ENCODE measurements at regions of chr15 and their contacts with region 1.

Region 1: DNA sequence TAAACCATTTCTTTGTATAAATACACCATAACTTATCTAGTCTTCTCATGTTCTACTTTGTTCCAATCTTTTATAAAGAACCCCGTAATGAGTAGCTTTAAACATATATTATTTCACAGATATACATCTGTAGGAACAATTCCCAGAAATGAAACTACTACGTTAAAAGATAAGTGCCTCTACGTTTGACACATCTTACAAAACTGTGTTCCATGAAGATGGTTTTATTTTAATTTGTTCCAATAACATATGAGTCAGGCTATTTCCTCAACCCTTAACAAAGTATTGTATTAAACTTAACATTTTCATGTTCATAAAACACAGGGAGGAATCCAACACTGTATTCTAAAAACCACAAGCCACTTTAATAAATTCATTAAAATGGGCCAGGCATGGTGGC is 52.9 kb downstream of the TRPM7 start:
- DNase-seq: no peak
- ATAC-seq: no peak
- H3K4me3 ChIP-seq: no peak overlapping the region
- H3K4me3 Mint-ChIP-seq: no peak overlapping the region
- H3K27ac ChIP-seq: no peak overlapping the region
- H3K27ac Mint-ChIP-seq: no peak overlapping the region
- H3K4me1 ChIP-seq: no peaks in the 10 kb centered on the region
- H3K4me1 Mint-ChIP-seq: no peaks in the 10 kb centered on the region
- H3K27me3 ChIP-seq: no peaks in the 10 kb centered on the region
- H3K27me3 Mint-ChIP-seq: no peaks in the 10 kb centered on the region
- CTCF ChIP-seq: no peak

Region 2: GRCh38 chr15:50519740-50520425 is 113.8 kb before region 1 on chr15:
- CTCF ChIA-PET with region 1: no interaction called
- POLR2A ChIA-PET with region 1: no interaction called
- intact Hi-C with region 1: no loop called
- DNase-seq: no peak
- ATAC-seq: no peak
- H3K4me3 ChIP-seq: no peak overlapping the region
- H3K4me3 Mint-ChIP-seq: no peak overlapping the region
- H3K27ac ChIP-seq: no peak overlapping the region
- H3K27ac Mint-ChIP-seq: no peak overlapping the region
- H3K4me1 ChIP-seq: no peaks in the 10 kb centered on the region
- H3K4me1 Mint-ChIP-seq: no peaks in the 10 kb centered on the region
- H3K27me3 ChIP-seq: no peaks in the 10 kb centered on the region
- H3K27me3 Mint-ChIP-seq: no peaks in the 10 kb centered on the region
- CTCF ChIP-seq: no peak

Region 3: GRCh38 chr15:50576166-50576565 is 57.5 kb before region 1 on chr15:
- CTCF ChIA-PET with region 1: no interaction called
- POLR2A ChIA-PET with region 1: no interaction called
- intact Hi-C with region 1: loop called (anchors 10 kb)
- DNase-seq: no peak
- ATAC-seq: no peak
- H3K4me3 ChIP-seq: no peak overlapping the region
- H3K4me3 Mint-ChIP-seq: no peak overlapping the region
- H3K27ac ChIP-seq: no peak overlapping the region
- H3K27ac Mint-ChIP-seq: no peak overlapping the region
- H3K4me1 ChIP-seq: no peaks in the 10 kb centered on the region
- H3K4me1 Mint-ChIP-seq: no peaks in the 10 kb centered on the region
- H3K27me3 ChIP-seq: no peaks in the 10 kb centered on the region
- H3K27me3 Mint-ChIP-seq: no peaks in the 10 kb centered on the region
- CTCF ChIP-seq: no peak